ENCODE measurements at regions of chr5 and their contacts with region 1.

Region 1: GRCh38 chr5:124729720-124730359 is 16.6 kb downstream of the ZNF608 start:
- DNase-seq: no peak
- ATAC-seq: no peak
- H3K4me3 ChIP-seq: no peak overlapping the region
- H3K27ac ChIP-seq: no peak overlapping the region
- H3K4me1 ChIP-seq: no peaks in the 10 kb centered on the region; the same call in 1 of the 2 replicates
- H3K27me3 ChIP-seq: 0 out of 5 replicates have a peak, but pooled peaks cover 0 to 2% of the 10 kb centered on the region in 2 experiments
- CTCF ChIP-seq: no peak
- EP300 ChIP-seq: no peak
- POLR2A ChIP-seq: no peak
- RAD21 ChIP-seq: no peak

Region 2: GRCh38 chr5:124289641-124290311 is 440.1 kb before region 1 on chr5:
- CTCF ChIA-PET with region 1: no interaction called
- POLR2A ChIA-PET with region 1: no interaction called
- in situ Hi-C with region 1: no loop called
- intact Hi-C with region 1: no loop called
- DNase-seq: peak; percentile 91
- ATAC-seq: peak; percentile 96
- H3K4me3 ChIP-seq: no peak overlapping the region; a peak in 1 of 6 replicates
- H3K27ac ChIP-seq: peak overlapping the region; percentile 42
- H3K4me1 ChIP-seq: peaks cover 41% of the 10 kb centered on the region
- H3K27me3 ChIP-seq: no peaks in the 10 kb centered on the region
- CTCF ChIP-seq: peak; percentile 57
- EP300 ChIP-seq: peak in 1 of 2 experiments; percentile 83; a peak in 2 of 4 replicates
- POLR2A ChIP-seq: no peak
- RAD21 ChIP-seq: no peak

Region 3: DNA sequence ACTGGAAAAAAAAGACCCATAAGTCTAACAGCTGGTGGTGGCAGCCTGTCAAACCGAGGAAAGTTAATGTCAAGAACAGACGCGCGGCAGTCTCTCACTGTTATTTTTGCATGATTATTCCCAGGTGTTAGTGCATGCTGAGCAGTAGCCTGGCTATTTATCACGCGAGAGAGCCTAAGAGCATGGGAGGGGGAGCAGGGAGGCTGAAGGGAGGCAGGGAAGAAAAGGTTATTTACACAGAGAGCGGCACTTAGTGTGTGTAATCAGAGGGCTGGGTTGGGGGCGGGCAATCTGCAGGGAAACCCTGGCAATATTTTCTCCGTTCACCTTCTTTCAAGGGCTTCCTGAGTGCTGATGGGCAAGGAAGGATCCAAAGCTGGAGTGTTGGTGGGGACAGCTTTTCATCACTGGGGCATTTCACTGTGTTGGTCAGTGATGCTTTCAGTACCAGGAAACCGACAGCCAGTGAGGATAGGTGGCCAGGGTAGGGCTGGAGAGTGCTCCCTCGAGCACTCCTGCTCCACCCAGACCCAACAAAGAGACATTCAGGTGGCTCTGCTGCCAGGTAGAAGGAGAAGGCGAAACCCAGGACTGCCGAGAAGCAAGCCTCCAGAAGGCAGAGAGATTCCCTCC is 23.0 kb before region 1 on chr5:
- CTCF ChIA-PET with region 1: no interaction called
- POLR2A ChIA-PET with region 1: no interaction called
- in situ Hi-C with region 1: no loop called
- intact Hi-C with region 1: no loop called
- DNase-seq: peak; percentile 9
- ATAC-seq: peak; percentile 66
- H3K4me3 ChIP-seq: peak overlapping the region in 1 of 3 experiments; percentile 24; a peak in 1 of 6 replicates
- H3K27ac ChIP-seq: no peak overlapping the region
- H3K4me1 ChIP-seq: peaks cover 31% of the 10 kb centered on the region
- H3K27me3 ChIP-seq: no peaks in the 10 kb centered on the region; a peak in 1 of 5 replicates
- CTCF ChIP-seq: no peak
- EP300 ChIP-seq: no peak
- POLR2A ChIP-seq: no peak
- RAD21 ChIP-seq: no peak

Region 4: DNA sequence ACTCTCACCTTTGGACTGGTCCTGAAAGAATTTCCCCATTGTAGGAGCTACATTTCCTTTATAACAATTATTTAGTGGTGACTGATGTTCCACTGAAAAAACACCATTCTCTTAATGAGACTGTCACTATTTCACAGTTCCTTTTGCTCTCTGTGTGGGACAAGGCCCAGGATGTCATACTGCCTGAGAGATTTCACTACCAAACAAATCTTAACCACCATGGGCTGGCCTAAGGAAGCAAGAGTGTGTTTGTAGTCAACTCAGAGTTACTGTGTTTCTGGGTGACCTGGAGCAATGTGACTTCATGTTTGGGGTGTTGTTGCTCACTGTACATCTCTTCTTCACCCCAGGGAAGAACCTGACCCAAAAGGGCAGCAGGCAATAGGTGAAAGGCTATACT is 66.7 kb after region 1 on chr5:
- CTCF ChIA-PET with region 1: no interaction called
- POLR2A ChIA-PET with region 1: no interaction called
- in situ Hi-C with region 1: no loop called
- intact Hi-C with region 1: no loop called
- DNase-seq: no peak
- ATAC-seq: no peak
- H3K4me3 ChIP-seq: no peak overlapping the region
- H3K27ac ChIP-seq: no peak overlapping the region
- H3K4me1 ChIP-seq: no peaks in the 10 kb centered on the region
- H3K27me3 ChIP-seq: no peaks in the 10 kb centered on the region; a peak in 2 of 5 replicates
- CTCF ChIP-seq: no peak
- EP300 ChIP-seq: no peak
- POLR2A ChIP-seq: no peak
- RAD21 ChIP-seq: no peak

Region 5: GRCh38 chr5:126525630-126526245 is 1795.9 kb after region 1 on chr5:
- CTCF ChIA-PET with region 1: no interaction called
- POLR2A ChIA-PET with region 1: no interaction called
- in situ Hi-C with region 1: no loop called
- intact Hi-C with region 1: loop called (anchors 5 kb)
- DNase-seq: peak; percentile 40
- ATAC-seq: peak; percentile 95
- H3K4me3 ChIP-seq: peak overlapping the region; percentile 16 to 52 (median 46); a peak in 5 of 6 replicates
- H3K27ac ChIP-seq: no peak overlapping the region
- H3K4me1 ChIP-seq: 0 out of 2 replicates have a peak, but pooled peaks cover 7% of the 10 kb centered on the region
- H3K27me3 ChIP-seq: no peaks in the 10 kb centered on the region
- CTCF ChIP-seq: no peak
- EP300 ChIP-seq: no peak
- POLR2A ChIP-seq: peak in 1 of 2 experiments; percentile 69; a peak in 2 of 4 replicates
- RAD21 ChIP-seq: no peak